ENCODE measurements at regions of chr10 and their contacts with region 1.

Region 1: DNA sequence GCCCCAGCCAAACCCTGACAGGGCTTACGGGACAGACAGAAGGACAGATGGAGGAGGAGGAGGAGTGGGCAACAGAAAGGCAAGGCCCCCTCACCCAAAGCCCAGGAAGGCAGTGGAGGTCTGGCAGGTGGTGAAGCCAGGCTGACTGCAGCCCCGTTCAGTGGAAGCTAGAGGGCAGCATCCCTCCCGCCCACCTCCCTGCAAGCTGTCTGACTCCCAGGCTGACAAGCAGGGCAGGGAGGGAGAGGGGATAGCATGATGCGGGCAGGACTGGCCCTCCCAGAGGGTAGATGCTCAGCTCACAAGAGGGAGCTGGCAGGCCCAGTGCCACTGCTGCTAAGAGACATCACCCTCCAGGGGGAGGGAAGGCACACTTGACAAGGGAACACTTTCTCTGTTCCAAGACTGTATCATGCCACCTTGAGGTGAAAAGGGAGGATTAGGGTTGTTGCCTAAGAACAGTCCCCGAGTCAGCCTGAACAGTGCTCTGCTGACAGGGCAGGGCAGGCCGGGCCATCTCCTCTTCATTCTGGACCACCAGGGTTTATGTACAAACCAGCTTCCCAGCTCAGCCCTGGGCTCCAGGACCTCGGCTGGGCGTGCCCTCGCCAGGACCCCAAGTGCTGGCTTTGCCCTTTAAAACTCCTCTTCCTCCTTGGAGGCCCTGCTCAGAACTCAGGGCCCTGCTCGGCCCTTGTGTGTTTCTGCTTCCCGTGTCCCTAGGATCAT is 61.8 kb downstream of the RASGEF1A start:
- DNase-seq: peak; percentile 77
- H3K4me3 ChIP-seq: no peak overlapping the region
- H3K27ac ChIP-seq: no peak overlapping the region
- H3K4me1 ChIP-seq: peaks cover 8% of the 10 kb centered on the region
- CTCF ChIP-seq: peak; percentile 94

Region 2: DNA sequence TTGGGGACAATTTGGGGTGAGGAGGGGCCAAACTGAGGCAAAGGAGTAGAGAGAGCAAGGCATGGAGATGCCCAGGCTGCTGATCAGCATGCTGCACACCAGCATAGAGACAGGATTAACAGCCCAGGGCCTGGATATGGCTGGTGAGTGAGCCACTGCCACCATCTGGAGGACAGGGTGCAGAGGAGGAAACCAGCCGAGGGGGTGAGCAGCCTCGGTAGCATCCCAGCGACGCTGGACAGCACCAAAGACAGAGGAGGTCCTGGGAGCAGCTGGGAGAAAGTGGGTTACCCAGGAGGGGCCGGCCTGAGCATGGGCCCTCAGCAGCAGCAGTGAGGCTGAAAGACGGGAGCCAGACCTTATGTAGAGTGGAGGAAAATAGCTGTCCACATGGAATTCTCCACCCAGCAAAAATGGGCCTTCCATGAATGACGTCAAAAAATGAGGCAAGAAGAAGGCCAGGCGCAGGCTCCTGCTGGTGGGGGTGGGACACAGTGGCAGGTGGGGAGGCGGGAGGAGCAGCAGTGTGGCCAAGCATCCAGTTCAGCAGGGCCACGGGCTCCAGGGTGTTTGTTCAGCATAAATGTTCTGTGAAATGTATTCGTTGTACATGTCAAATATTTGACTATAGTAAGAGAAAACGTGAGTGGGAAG is 111.6 kb before region 1 on chr10:
- CTCF ChIA-PET with region 1: interaction called, 10 read pairs
- POLR2A ChIA-PET with region 1: no interaction called
- intact Hi-C with region 1: no loop called
- DNase-seq: no peak
- H3K4me3 ChIP-seq: no peak overlapping the region
- H3K27ac ChIP-seq: no peak overlapping the region
- H3K4me1 ChIP-seq: peaks cover 18% of the 10 kb centered on the region
- CTCF ChIP-seq: no peak

Region 3: GRCh38 chr10:43138021-43138756 is 66.9 kb before region 1 on chr10 and contains the start of gene CSGALNACT2:
- CTCF ChIA-PET with region 1: interaction called, 3 read pairs
- POLR2A ChIA-PET with region 1: interaction called, 8 read pairs
- intact Hi-C with region 1: loop called (anchors 2 kb)
- DNase-seq: peak; percentile 93
- H3K4me3 ChIP-seq: peak within 1 kb of the TSS; percentile 92
- H3K27ac ChIP-seq: peak within 1 kb of the TSS; percentile 83
- H3K4me1 ChIP-seq: peaks cover 80% of the 10 kb centered on the region
- CTCF ChIP-seq: 0 out of 2 replicates have a peak, but pooled peaks have one; percentile 29
- total RNA-seq, gene CSGALNACT2: 13.2 and 16.7 TPM in 2 replicates

Region 4: DNA sequence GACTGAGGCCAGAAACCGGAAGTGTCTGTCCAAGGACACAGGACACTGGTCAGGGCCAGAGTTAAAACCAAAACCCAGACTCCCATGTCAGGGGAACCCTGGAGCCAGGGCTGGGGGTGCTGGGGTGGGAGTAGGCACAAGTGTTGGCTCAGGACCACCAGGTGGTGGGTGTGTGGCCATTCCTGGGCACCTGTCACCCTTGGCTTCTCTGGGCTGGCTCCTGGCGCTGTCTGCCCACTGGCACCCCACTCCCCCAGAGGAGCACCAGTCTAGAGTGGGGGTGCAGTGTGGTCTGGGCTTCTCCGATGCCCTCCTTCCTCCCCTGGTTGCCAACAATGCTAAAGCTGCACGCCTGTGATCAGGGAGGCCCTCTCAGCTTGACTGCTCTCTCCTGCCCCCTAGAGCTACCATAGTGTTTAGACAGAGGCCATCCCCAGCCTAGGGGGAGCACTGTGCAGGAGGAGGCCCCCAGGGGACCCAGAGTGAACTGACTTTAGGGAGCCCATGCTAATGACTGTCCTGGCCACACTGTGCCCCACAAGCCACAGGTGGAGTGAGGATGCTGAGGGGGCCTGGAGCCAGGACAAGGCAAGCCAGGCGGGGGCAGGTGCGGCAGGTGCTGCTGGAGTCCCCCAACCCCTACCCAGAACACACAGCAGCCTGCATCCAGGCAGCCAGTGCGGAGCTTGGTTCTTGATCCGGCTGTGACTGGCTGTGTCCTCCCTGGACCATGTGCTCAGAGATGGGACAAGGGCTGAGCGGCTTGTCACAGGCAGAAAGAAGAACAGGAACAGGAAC is 50.7 kb after region 1 on chr10:
- CTCF ChIA-PET with region 1: interaction called, 3 read pairs
- POLR2A ChIA-PET with region 1: interaction called, 3 read pairs
- intact Hi-C with region 1: loop called (anchors 1 kb)
- DNase-seq: peak; percentile 68
- H3K4me3 ChIP-seq: no peak overlapping the region
- H3K27ac ChIP-seq: no peak overlapping the region
- H3K4me1 ChIP-seq: no peaks in the 10 kb centered on the region
- CTCF ChIP-seq: peak; percentile 83

Region 5: DNA sequence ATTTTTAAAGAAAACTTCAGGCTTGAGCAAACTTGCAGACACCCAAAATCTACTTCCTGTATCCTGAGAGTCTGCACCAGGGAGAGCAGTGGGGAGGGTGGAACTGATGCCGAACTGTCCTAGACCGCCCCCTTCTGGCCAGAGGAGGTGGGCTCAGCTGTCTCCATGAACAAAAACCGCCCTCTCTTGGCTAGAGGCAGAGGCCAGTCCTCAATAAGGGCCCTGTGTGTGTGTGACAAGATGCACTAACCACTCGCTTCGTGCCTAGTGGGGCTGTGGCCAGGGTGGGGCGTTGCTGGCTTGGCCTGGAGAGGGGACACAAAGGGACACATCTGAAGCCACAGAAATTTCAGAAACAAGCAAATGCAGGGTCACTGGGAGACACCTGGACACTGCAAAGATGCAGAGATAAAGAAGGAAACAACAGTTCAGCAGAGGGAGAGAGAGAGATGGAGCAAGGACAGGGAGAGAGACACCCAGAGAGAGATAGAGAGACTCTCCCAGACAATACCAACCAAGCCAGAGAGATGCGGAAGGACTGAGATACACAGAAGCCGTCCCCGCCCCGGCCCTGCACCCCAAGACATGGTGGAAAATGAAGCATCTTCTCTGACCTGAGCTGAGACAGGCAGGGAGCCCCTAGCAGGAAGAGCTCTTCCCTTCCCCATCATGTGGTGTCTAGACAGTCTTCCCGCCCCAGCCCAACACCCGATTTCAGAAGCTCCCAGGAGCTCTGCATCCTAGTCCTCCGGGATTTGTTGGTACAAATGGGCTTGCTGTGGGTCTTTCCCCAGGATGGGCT is 143.6 kb after region 1 on chr10:
- CTCF ChIA-PET with region 1: no interaction called
- POLR2A ChIA-PET with region 1: no interaction called
- intact Hi-C with region 1: loop called (anchors 1 kb)
- DNase-seq: peak; percentile 88
- H3K4me3 ChIP-seq: no peak overlapping the region
- H3K27ac ChIP-seq: no peak overlapping the region
- H3K4me1 ChIP-seq: peaks cover 8% of the 10 kb centered on the region
- CTCF ChIP-seq: peak; percentile 98

Measured in OCI-LY7 (cell line).